CD4-positive, alpha-beta T cell (primary cell): ENCODE measurements at regions of chr7 and their contacts with region 1.

Region 1: GRCh38 chr7:106285051-106285854 is 470 bp upstream of the NAMPT start:
- DNase-seq: peak; percentile 92 to 100 (median 97)
- ATAC-seq: peak; percentile 88
- H3K4me3 ChIP-seq: peak overlapping the region; percentile 75
- H3K4me3 Mint-ChIP-seq: peak overlapping the region; percentile 99
- H3K27ac ChIP-seq: peak overlapping the region; percentile 84 to 91
- H3K27ac Mint-ChIP-seq: peak overlapping the region; percentile 94
- H3K4me1 ChIP-seq: peaks cover 9% of the 10 kb centered on the region
- H3K4me1 Mint-ChIP-seq: peaks cover 37% of the 10 kb centered on the region
- H3K27me3 ChIP-seq: no peaks in the 10 kb centered on the region
- H3K27me3 Mint-ChIP-seq: no peaks in the 10 kb centered on the region
- CTCF ChIP-seq: no peak

Region 2: DNA sequence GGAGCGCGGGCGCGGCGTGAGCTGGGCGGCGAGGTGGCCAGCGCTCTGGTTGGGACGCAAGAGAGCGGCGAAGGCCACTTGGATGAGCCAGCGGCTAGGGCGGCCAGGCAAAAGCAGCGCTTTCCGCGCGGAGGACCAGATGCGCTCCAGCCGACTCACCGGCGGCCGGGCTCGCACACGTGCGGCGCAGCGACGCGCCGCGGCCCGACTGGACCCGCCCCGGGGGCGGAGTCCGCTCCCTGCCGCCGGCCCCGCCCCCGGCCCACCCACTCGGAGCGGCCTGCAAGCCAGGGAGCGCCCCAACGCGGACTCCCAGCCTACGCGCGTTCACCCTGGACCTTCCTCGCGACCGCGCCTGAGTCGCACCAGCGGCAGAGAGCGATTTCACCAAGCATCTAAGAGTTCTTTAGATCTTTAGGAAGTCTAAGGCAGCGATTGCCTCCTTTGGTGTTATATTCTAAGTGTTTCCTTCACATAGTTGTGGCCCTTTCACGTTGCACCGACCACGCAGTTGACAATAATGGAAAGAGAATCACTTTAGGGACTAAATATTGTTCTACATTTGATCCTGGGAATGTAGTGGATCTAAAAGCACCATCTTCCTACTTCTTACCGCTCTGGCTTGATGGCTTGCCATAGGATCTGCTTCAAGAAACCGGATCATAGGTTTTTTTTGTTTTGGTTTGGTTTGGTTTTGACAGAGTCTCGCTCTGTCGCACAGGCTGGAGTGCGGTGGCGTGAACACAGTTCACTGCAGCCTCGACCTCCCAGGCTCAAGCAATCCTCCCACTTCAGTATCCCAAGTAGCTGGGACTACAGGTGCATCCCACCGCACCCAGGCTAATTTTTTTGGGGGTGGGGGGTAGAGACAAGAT is 763.0 kb before region 1 on chr7 and contains the start of gene PUS7:
- CTCF ChIA-PET with region 1: no interaction called
- POLR2A ChIA-PET with region 1: no interaction called
- intact Hi-C with region 1: loop called in 1 of 2 experiments (anchors 10 kb)
- DNase-seq: peak; percentile 61 to 92 (median 76)
- ATAC-seq: peak; percentile 94
- H3K4me3 ChIP-seq: peak within 1 kb of the TSS; percentile 57
- H3K4me3 Mint-ChIP-seq: peak within 1 kb of the TSS; percentile 98
- H3K27ac ChIP-seq: peak within 1 kb of the TSS; percentile 21 to 67
- H3K27ac Mint-ChIP-seq: peak within 1 kb of the TSS; percentile 85
- H3K4me1 ChIP-seq: peaks cover 18% of the 10 kb centered on the region
- H3K4me1 Mint-ChIP-seq: peaks cover 15% of the 10 kb centered on the region
- H3K27me3 ChIP-seq: no peaks in the 10 kb centered on the region
- H3K27me3 Mint-ChIP-seq: no peaks in the 10 kb centered on the region
- CTCF ChIP-seq: no peak
- total RNA-seq, gene PUS7: 2.7 TPM

Region 3: GRCh38 chr7:106071356-106071998 is 213.8 kb before region 1 on chr7:
- CTCF ChIA-PET with region 1: no interaction called
- POLR2A ChIA-PET with region 1: interaction called, 12 read pairs
- intact Hi-C with region 1: no loop called
- DNase-seq: peak in 13 of 14 experiments; percentile 11 to 83 (median 34)
- ATAC-seq: peak; percentile 95
- H3K4me3 ChIP-seq: peak overlapping the region; percentile 44
- H3K4me3 Mint-ChIP-seq: peak overlapping the region; percentile 54
- H3K27ac ChIP-seq: peak overlapping the region; percentile 79 to 86
- H3K27ac Mint-ChIP-seq: peak overlapping the region; percentile 95
- H3K4me1 ChIP-seq: peaks cover 44% of the 10 kb centered on the region
- H3K4me1 Mint-ChIP-seq: peaks cover 63% of the 10 kb centered on the region
- H3K27me3 ChIP-seq: no peaks in the 10 kb centered on the region
- H3K27me3 Mint-ChIP-seq: no peaks in the 10 kb centered on the region
- CTCF ChIP-seq: no peak

Region 4: DNA sequence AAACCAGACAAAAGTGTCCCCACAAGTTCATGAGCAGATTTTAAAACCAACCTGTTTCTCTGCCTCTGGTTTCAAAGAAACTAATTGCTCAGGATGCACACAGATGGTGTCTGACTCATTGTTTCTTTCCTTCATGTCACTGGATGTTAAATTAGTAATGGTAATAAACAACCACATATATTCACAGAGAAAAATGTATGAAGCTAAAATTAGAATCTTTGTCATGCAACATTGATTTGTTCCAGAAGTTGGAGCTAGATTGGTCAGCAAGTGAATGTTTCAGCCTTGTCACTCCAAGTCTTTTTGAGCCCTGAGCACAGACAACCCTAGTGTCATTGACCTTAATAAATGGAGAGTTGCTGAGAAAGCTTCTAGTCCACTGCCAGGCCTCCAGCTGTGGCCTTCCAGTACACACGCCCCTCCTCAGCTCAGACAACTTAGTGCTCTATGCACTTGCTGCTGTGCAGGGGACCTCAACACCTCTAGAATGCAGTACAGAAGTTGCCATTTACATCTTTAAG is 199.8 kb after region 1 on chr7:
- CTCF ChIA-PET with region 1: no interaction called
- POLR2A ChIA-PET with region 1: no interaction called
- intact Hi-C with region 1: no loop called
- DNase-seq: no peak
- ATAC-seq: no peak
- H3K4me3 ChIP-seq: no peak overlapping the region
- H3K4me3 Mint-ChIP-seq: no peak overlapping the region
- H3K27ac ChIP-seq: no peak overlapping the region
- H3K27ac Mint-ChIP-seq: no peak overlapping the region
- H3K4me1 ChIP-seq: no peaks in the 10 kb centered on the region
- H3K4me1 Mint-ChIP-seq: no peaks in the 10 kb centered on the region
- H3K27me3 ChIP-seq: peaks cover 4 to 7% of the 10 kb centered on the region in 2 experiments
- H3K27me3 Mint-ChIP-seq: peaks cover 43% of the 10 kb centered on the region
- CTCF ChIP-seq: no peak

Region 5: GRCh38 chr7:106598663-106599342 is 313.6 kb after region 1 on chr7:
- CTCF ChIA-PET with region 1: no interaction called
- POLR2A ChIA-PET with region 1: interaction called, 7 read pairs
- intact Hi-C with region 1: loop called in 1 of 2 experiments (anchors 10 kb)
- DNase-seq: peak; percentile 30 to 90 (median 50)
- ATAC-seq: peak; percentile 100
- H3K4me3 ChIP-seq: no peak overlapping the region
- H3K4me3 Mint-ChIP-seq: peak overlapping the region; percentile 42
- H3K27ac ChIP-seq: no peak overlapping the region
- H3K27ac Mint-ChIP-seq: peak overlapping the region; percentile 59
- H3K4me1 ChIP-seq: peaks cover 8% of the 10 kb centered on the region
- H3K4me1 Mint-ChIP-seq: peaks cover 8% of the 10 kb centered on the region
- H3K27me3 ChIP-seq: no peaks in the 10 kb centered on the region
- H3K27me3 Mint-ChIP-seq: peaks cover 5% of the 10 kb centered on the region
- CTCF ChIP-seq: no peak